CD4-positive, alpha-beta T cell (primary cell): ENCODE measurements at regions of chr1 and their contacts with region 1.

Region 1: DNA sequence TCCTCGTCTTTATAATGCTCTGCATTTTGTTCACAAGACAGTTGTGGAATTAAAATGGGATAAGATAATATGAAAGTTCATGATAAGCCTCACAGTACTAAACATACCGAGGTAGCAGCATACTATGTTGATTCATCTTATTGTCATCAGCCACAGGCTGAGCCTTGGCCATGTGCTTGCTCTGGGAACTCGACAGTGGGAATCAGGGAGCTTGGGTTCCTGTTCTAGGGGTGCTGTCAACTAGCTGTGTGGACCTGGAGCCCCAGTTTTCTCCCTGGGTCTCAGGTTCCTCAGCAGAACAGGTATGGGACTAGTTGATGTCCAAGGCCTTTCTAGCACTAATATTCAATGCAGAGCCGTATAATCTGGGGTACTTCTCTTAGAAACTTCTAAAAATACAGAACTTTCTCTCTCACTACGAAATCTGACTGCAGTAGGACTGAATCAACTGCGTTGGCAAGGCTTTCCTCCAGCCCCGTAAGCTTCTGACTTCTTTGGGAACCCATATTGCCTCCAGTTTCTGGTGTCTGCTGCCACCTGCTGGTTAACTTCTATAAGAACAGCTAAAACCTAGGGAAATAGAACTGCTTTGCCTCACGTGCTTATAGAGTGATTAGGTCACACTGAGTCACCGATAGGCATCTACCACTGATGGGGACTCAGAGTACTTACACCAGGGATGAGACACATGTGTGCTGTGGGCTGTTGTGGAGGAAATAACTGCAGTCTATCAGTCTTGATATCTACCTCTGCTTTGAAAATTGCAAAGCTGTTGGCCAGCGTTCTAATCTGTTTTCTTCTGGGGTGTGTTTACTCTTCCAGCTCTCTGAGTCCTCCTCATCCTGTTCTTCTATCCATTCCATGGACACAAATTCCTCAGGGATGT is 110.9 kb downstream of the RGL1 start:
- DNase-seq: peak; percentile 43 to 90 (median 60)
- ATAC-seq: peak; percentile 94
- H3K4me3 ChIP-seq: no peak overlapping the region
- H3K4me3 Mint-ChIP-seq: no peak overlapping the region
- H3K27ac ChIP-seq: no peak overlapping the region
- H3K27ac Mint-ChIP-seq: no peak overlapping the region
- H3K4me1 ChIP-seq: peaks cover 9% of the 10 kb centered on the region
- H3K4me1 Mint-ChIP-seq: peaks cover 11% of the 10 kb centered on the region
- H3K27me3 ChIP-seq: no peaks in the 10 kb centered on the region
- H3K27me3 Mint-ChIP-seq: no peaks in the 10 kb centered on the region
- CTCF ChIP-seq: peak; percentile 85

Region 2: DNA sequence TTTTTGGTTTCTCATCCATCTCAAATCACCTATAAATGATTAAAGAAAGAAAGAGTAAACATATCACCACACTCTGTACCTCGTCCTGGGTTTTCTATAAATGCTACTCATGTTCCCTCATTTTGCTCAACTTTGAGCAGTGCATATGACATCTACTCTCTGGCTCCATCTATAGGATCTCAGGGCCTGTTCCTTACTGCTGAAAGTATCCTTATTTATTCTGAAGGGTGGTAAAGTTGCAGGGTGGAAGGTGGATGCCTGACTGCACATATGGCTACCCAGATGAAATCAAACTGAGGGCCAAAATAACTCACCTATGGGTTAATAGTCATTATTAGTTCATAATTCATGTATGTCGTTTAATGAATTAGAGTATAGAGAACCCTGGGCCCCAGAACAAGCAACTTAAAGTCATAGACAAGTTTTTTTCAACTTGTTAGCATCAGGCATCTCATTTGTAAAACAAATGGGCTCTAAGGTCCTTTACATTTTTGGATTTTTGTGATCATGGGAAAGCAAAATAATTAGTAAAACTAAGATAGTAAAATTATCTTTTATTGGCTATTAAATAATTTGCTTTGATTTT is 372.2 kb before region 1 on chr1:
- CTCF ChIA-PET with region 1: no interaction called
- POLR2A ChIA-PET with region 1: no interaction called
- intact Hi-C with region 1: loop called in 1 of 2 experiments (anchors 2 kb)
- DNase-seq: peak in 5 of 14 experiments; percentile 13 to 69 (median 62)
- ATAC-seq: peak; percentile 99
- H3K4me3 ChIP-seq: no peak overlapping the region
- H3K4me3 Mint-ChIP-seq: no peak overlapping the region
- H3K27ac ChIP-seq: no peak overlapping the region
- H3K27ac Mint-ChIP-seq: peak overlapping the region; percentile 19
- H3K4me1 ChIP-seq: no peaks in the 10 kb centered on the region
- H3K4me1 Mint-ChIP-seq: peaks cover 6% of the 10 kb centered on the region
- H3K27me3 ChIP-seq: no peaks in the 10 kb centered on the region
- H3K27me3 Mint-ChIP-seq: no peaks in the 10 kb centered on the region
- CTCF ChIP-seq: peak; percentile 57

Region 3: DNA sequence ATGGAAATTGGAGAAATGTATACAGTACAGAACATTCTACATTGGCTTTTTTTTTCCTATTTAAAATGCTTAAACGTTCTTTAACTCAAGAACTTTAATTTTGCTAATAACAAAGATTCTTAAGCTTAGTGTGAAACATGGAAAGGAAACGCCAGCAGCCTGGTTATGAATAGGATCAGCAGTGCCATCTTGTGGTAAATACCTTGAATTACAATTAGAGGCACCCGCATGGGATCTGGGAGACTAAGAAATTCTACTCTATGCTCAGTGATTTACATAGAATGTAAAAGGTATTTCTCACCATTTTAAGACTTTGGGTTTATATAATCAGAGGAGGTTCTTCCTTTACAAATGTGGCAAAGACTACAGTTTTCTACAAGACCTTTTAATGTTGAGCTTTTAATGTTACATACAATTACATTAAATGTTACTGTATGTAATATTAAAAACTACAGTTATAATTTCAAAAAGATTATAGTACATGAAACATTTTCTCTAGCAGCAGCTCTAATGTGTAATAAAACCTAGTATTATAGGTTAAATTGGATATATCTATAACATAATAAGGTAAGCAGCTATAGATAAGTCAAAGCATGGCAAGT is 230.7 kb before region 1 on chr1:
- CTCF ChIA-PET with region 1: interaction called, 11 read pairs
- POLR2A ChIA-PET with region 1: interaction called, 5 read pairs
- intact Hi-C with region 1: loop called in 1 of 2 experiments (anchors 10 kb)
- DNase-seq: peak in 7 of 14 experiments; percentile 2 to 73 (median 30)
- ATAC-seq: peak; percentile 60
- H3K4me3 ChIP-seq: no peak overlapping the region
- H3K4me3 Mint-ChIP-seq: no peak overlapping the region
- H3K27ac ChIP-seq: no peak overlapping the region
- H3K27ac Mint-ChIP-seq: no peak overlapping the region
- H3K4me1 ChIP-seq: no peaks in the 10 kb centered on the region
- H3K4me1 Mint-ChIP-seq: no peaks in the 10 kb centered on the region
- H3K27me3 ChIP-seq: no peaks in the 10 kb centered on the region
- H3K27me3 Mint-ChIP-seq: no peaks in the 10 kb centered on the region
- CTCF ChIP-seq: peak; percentile 85

Region 4: GRCh38 chr1:183896466-183897048 is 19.3 kb before region 1 on chr1:
- CTCF ChIA-PET with region 1: no interaction called
- POLR2A ChIA-PET with region 1: no interaction called
- intact Hi-C with region 1: no loop called
- DNase-seq: peak in 2 of 14 experiments; percentile 44 to 49
- ATAC-seq: no peak
- H3K4me3 ChIP-seq: no peak overlapping the region
- H3K4me3 Mint-ChIP-seq: no peak overlapping the region
- H3K27ac ChIP-seq: no peak overlapping the region
- H3K27ac Mint-ChIP-seq: no peak overlapping the region
- H3K4me1 ChIP-seq: no peaks in the 10 kb centered on the region
- H3K4me1 Mint-ChIP-seq: peaks cover 13% of the 10 kb centered on the region
- H3K27me3 ChIP-seq: no peaks in the 10 kb centered on the region
- H3K27me3 Mint-ChIP-seq: no peaks in the 10 kb centered on the region
- CTCF ChIP-seq: no peak

Region 5: DNA sequence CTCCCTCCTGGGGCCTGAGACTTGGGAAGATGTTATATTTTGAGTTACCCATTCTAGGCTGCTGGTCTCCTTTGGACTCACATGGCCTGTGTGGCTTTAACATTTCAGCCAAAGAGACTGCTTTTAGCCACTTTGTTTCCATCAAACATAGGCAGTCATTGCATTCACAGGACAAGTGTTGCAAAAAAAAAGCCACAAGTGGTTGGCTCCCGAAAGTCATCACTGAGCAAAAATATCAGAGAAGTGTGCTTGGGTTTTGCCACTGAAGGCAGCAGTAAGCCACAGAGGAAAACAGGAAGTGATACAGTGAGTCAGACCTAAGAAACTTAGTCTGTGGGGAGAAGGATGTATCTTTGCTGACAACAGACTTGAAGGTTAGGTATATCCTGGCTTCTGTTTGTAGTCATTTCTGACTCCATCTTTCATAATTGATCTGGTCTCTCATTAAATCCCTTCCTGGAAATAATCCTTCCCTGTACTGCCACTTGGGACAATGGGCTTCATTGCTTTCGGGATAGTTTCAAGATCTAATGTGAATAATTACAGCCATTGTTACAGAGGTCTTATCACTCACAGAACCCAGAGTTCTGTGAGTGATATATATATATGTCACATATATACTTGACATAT is 40.8 kb after region 1 on chr1:
- CTCF ChIA-PET with region 1: interaction called, 29 read pairs
- POLR2A ChIA-PET with region 1: interaction called, 3 read pairs
- intact Hi-C with region 1: no loop called
- DNase-seq: peak in 13 of 14 experiments; percentile 9 to 91 (median 36)
- ATAC-seq: peak; percentile 100
- H3K4me3 ChIP-seq: no peak overlapping the region
- H3K4me3 Mint-ChIP-seq: peak overlapping the region; percentile 7
- H3K27ac ChIP-seq: peak overlapping the region; percentile 60 to 74
- H3K27ac Mint-ChIP-seq: no peak overlapping the region
- H3K4me1 ChIP-seq: peaks cover 20% of the 10 kb centered on the region
- H3K4me1 Mint-ChIP-seq: peaks cover 6% of the 10 kb centered on the region
- H3K27me3 ChIP-seq: no peaks in the 10 kb centered on the region
- H3K27me3 Mint-ChIP-seq: no peaks in the 10 kb centered on the region
- CTCF ChIP-seq: peak; percentile 39